ENCODE measurements at regions of chr5 and their contacts with region 1.

Region 1: DNA sequence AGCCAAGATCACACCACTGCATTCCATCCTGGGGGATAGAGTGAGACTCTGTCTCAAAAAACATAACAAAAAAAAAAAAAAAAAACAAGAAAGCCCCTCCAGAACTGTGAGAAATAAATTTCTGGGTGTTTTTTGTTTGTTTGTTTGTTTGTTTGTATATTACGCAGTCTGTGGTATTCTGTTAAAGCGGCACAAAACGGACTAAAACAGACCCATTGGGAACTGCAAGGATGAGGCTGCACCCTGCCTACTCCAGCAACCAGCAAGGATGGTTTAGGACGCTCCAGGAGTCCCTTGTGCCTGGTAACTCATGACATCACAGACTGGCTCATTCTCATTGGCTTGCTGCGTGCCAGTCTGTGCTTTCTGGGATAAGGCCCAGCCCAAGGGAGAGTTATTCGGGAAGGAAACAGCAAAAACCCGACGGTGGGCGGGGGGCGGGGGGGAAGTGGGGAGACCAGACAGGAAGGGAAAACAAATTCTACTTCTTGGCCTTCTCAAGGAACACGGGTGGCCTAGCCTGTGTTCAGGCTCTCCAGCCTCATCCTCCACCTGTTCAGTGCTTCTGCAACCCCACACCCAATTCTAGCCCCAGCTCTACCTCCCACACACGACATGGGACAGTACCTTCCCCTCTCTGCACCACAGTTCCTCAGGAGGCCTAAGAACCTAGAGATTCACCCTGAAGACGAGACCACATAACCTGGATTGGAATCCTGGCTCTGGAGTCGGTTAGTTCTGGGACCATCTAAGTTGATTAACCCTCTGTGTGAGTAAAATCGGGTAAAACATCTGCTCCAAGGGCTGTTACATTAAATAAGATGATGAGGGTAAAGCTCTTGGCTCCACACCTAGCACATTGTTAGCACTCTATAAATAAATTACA is 2.8 kb downstream of the CD74 start:
- DNase-seq: no peak
- ATAC-seq: no peak
- H3K4me3 Mint-ChIP-seq: peak overlapping the region; percentile 98
- H3K27ac Mint-ChIP-seq: peak overlapping the region; percentile 100
- H3K4me1 Mint-ChIP-seq: peaks cover 65% of the 10 kb centered on the region
- H3K27me3 Mint-ChIP-seq: peaks cover 2% of the 10 kb centered on the region
- CTCF ChIP-seq: no peak

Region 2: GRCh38 chr5:150357326-150358260 is 52.3 kb before region 1 on chr5 and contains the start of gene TCOF1:
- CTCF ChIA-PET with region 1: no interaction called
- POLR2A ChIA-PET with region 1: interaction called, 8 read pairs
- intact Hi-C with region 1: loop called (anchors 1 kb)
- DNase-seq: peak; percentile 98
- ATAC-seq: peak; percentile 97
- H3K4me3 Mint-ChIP-seq: peak within 1 kb of the TSS; percentile 89
- H3K27ac Mint-ChIP-seq: peak within 1 kb of the TSS; percentile 93
- H3K4me1 Mint-ChIP-seq: peaks cover 49% of the 10 kb centered on the region
- H3K27me3 Mint-ChIP-seq: no peaks in the 10 kb centered on the region
- CTCF ChIP-seq: no peak
- total RNA-seq, gene TCOF1: 74.7 and 76.1 TPM in 2 replicates

Region 3: DNA sequence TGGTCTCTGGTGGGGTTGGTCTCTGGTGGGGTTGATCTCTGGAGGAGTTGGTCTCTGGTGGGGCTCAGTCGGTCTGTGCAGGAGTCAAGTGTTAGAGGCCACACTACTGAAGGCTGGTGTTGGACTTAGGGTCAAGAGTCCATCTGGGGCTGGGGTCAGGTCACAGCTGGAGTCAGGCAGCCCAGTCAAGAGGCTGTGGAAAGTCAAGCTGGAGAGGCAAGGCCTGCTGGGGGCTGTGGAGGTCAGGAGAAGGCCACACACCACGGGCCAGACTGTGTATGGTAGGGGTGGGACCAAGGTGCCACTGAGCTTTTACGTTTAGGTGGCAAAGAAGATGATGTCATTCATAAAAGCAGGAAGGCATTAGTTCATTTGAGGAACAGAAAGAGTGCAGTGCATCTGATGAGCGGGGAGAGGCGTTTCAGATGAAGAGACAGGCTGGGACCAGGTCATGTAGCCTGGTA is 19.6 kb after region 1 on chr5:
- CTCF ChIA-PET with region 1: interaction called, 43 read pairs
- POLR2A ChIA-PET with region 1: interaction called, 2,478 read pairs
- intact Hi-C with region 1: loop called (anchors 1 kb)
- DNase-seq: no peak
- ATAC-seq: peak; percentile 97
- H3K4me3 Mint-ChIP-seq: peak overlapping the region; percentile 53
- H3K27ac Mint-ChIP-seq: peak overlapping the region; percentile 94
- H3K4me1 Mint-ChIP-seq: peaks cover 67% of the 10 kb centered on the region
- H3K27me3 Mint-ChIP-seq: no peaks in the 10 kb centered on the region
- CTCF ChIP-seq: no peak

Region 4: GRCh38 chr5:150449517-150450339 is 39.8 kb after region 1 on chr5 and contains the start of gene RPS14:
- CTCF ChIA-PET with region 1: interaction called, 7 read pairs
- POLR2A ChIA-PET with region 1: interaction called, 2,478 read pairs
- intact Hi-C with region 1: loop called (anchors 1 kb)
- DNase-seq: peak; percentile 91
- ATAC-seq: peak; percentile 93
- H3K4me3 Mint-ChIP-seq: peak within 1 kb of the TSS; percentile 100
- H3K27ac Mint-ChIP-seq: peak within 1 kb of the TSS; percentile 100
- H3K4me1 Mint-ChIP-seq: peaks cover 43% of the 10 kb centered on the region
- H3K27me3 Mint-ChIP-seq: no peaks in the 10 kb centered on the region
- CTCF ChIP-seq: peak; percentile 53
- total RNA-seq, gene RPS14: 4,086 and 4,865 TPM in 2 replicates

Region 5: GRCh38 chr5:150700594-150701293 is 290.9 kb after region 1 on chr5 and contains the start of gene RBM22:
- CTCF ChIA-PET with region 1: no interaction called
- POLR2A ChIA-PET with region 1: interaction called, 13 read pairs
- intact Hi-C with region 1: no loop called
- DNase-seq: peak; percentile 84
- ATAC-seq: peak; percentile 95
- H3K4me3 Mint-ChIP-seq: no peak within 1 kb of the TSS
- H3K27ac Mint-ChIP-seq: no peak within 1 kb of the TSS
- H3K4me1 Mint-ChIP-seq: peaks cover 6% of the 10 kb centered on the region
- H3K27me3 Mint-ChIP-seq: no peaks in the 10 kb centered on the region
- CTCF ChIP-seq: no peak
- total RNA-seq, gene RBM22: 74.0 and 74.1 TPM in 2 replicates

Region 6: GRCh38 chr5:151086905-151087360 is 677.1 kb after region 1 on chr5:
- CTCF ChIA-PET with region 1: no interaction called
- POLR2A ChIA-PET with region 1: interaction called, 12 read pairs
- intact Hi-C with region 1: no loop called
- DNase-seq: peak; percentile 57
- ATAC-seq: peak; percentile 86
- H3K4me3 Mint-ChIP-seq: peak overlapping the region; percentile 83
- H3K27ac Mint-ChIP-seq: peak overlapping the region; percentile 76
- H3K4me1 Mint-ChIP-seq: peaks cover 70% of the 10 kb centered on the region
- H3K27me3 Mint-ChIP-seq: no peaks in the 10 kb centered on the region
- CTCF ChIP-seq: no peak

Measured in activated B cell treated with CpG ODN at 0.5 μM for 24 hours (primary cell).